Cardiac septum (tissue), 1 donor: ENCODE measurements at regions of chr5 and their contacts with region 1.

Region 1: GRCh38 chr5:140647042-140647341 is 438 bp downstream of the NDUFA2 start:
- DNase-seq: no peak

Region 2: DNA sequence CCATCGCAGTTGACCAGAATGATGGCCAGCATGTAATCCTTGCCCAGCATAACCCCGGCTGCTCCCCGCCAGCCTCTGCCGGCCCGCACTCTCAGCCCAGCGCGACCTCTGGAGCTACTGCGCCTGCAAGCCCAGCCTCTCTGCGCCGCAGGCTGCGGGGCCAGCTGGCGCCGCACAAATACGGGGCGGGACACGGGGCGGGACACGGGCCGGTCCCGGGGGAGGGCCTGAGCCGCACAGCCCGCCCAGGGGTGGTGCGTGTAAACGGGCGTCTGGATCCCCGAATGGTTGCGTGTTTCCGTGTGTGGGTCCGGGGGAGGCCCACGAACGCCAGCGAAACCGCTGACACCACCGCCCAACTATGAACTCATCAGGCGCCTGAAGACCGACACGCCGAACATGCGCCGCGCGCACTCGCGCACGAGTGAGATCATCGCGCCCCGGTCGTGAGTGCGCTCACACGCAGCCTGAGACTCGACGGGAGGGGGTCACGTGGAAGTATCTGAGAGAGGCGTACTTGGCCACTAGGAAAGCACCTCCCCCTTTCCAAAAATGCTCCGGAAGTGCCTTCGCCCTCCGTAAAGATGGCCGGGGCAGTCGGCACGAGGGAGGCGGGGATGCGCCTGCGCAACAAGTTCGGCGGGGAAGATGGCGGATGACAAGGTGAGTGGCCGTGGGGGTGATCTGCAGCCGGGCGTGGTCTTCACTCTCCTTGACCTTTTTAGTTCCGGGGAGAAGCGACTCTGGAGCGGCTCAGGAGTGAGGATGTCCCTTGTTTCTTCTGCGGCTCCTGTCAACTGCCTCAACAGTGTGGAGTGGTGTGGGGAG is 82.6 kb before region 1 on chr5 and contains the starts of genes APBB3 and SLC35A4:
- intact Hi-C with region 1: loop called (anchors 5 kb)
- DNase-seq: peak; percentile 98
- total RNA-seq, gene APBB3: 18.4 TPM
- total RNA-seq, gene SLC35A4: 81.8 TPM

Region 3: GRCh38 chr5:140664359-140665119 is 17.5 kb after region 1 on chr5 and contains the start of gene WDR55:
- intact Hi-C with region 1: loop called (anchors 2 kb)
- DNase-seq: peak; percentile 99
- total RNA-seq, gene WDR55: 12.0 TPM

Region 4: GRCh38 chr5:141172378-141173204 is 525.6 kb after region 1 on chr5 and contains the start of gene PCDHB7:
- intact Hi-C with region 1: no loop called
- DNase-seq: no peak
- total RNA-seq, gene PCDHB7: 0.67 TPM